ENCODE measurements at regions of chr5 and their contacts with region 1.

Region 1: DNA sequence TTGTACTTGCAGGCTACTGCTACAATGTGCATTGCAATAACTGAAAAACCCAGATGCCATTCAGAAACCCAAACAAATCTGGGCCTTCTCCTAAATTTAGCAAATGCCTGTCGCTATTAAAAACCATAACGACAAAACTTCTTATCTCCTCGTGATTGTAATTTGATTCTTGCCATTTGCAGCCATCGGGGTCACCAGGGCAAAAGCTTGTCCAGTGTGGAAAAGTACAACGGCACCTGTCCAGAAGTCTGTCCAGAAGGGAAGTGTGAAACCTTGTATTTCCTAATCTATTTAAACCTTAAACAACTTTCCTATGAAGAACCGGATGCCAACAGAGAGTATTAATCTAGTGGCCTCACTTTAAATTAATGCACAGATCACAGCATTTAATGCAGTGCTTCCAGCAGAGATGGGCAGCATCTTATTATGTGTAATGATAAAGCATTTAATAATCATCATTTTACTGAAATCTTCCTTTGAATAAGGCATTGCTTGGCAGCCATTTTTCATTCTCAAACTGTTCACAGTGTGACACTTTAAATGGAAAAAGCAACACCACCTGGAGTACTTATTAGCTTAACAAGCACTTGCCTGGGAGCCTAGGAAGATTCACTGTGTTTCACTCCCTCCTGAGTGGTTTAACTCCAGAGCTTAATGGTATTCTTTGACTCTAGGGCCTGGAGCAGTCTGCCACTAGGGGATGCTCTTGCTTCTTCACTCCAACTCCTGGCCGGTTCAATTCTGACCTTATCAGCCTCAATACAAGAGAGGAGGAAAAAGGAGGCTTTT is 4.9 kb upstream of the C7 start:
- DNase-seq: peak; percentile 62
- H3K4me3 Mint-ChIP-seq: no peak overlapping the region
- H3K27ac Mint-ChIP-seq: no peak overlapping the region
- H3K4me1 Mint-ChIP-seq: no peaks in the 10 kb centered on the region
- H3K27me3 Mint-ChIP-seq: no peaks in the 10 kb centered on the region

Region 2: DNA sequence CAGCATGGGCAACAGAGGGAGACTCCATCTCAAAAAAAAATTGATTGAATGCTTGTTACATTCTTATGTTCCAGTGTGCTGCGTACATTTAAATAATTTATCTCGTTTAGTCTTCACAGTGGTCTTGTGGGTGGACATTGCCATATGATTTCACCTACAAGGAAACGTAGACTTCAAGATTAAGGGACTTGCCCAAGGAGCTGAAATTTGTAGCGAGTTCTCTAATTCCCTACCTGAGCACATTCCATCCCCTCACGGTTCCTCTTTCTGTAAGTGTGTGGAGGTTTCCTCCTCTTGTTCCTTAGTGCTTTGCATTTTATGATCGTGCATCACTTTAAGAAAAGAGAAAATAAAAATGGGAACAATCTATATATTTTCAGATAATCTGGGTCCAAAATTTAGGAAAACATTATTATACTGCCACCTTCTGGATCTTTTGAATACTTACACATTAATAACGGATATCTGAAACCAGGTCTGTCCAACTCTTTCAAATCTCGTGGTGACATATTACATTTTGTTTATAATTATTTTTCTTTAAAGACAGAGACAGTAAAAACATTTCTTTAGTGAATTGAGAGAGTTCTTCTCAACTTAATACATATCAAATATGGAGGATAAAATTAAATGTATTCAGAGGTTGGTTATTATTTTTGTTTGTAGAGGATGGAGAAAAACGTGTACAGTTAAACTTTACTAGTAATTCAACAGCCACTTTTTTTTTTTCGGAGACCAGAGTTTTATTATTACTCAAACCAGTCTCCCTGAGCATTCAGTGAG is 25.0 kb before region 1 on chr5:
- CTCF ChIA-PET with region 1: no interaction called
- intact Hi-C with region 1: no loop called
- DNase-seq: no peak
- H3K4me3 Mint-ChIP-seq: no peak overlapping the region
- H3K27ac Mint-ChIP-seq: no peak overlapping the region
- H3K4me1 Mint-ChIP-seq: peaks cover 4% of the 10 kb centered on the region
- H3K27me3 Mint-ChIP-seq: no peaks in the 10 kb centered on the region

Region 3: GRCh38 chr5:41524174-41524573 is 619.8 kb after region 1 on chr5:
- CTCF ChIA-PET with region 1: no interaction called
- intact Hi-C with region 1: loop called (anchors 5 kb)
- DNase-seq: no peak
- H3K4me3 Mint-ChIP-seq: no peak overlapping the region
- H3K27ac Mint-ChIP-seq: no peak overlapping the region
- H3K4me1 Mint-ChIP-seq: no peaks in the 10 kb centered on the region
- H3K27me3 Mint-ChIP-seq: no peaks in the 10 kb centered on the region

Measured in activated naive CD4-positive, alpha-beta T cell treated with anti-CD3 and anti-CD28 coated beads for 36 hours (primary cell).